Cardiac septum (tissue), 1 donor: ENCODE measurements at regions of chr4 and their contacts with region 1.

Region 1: DNA sequence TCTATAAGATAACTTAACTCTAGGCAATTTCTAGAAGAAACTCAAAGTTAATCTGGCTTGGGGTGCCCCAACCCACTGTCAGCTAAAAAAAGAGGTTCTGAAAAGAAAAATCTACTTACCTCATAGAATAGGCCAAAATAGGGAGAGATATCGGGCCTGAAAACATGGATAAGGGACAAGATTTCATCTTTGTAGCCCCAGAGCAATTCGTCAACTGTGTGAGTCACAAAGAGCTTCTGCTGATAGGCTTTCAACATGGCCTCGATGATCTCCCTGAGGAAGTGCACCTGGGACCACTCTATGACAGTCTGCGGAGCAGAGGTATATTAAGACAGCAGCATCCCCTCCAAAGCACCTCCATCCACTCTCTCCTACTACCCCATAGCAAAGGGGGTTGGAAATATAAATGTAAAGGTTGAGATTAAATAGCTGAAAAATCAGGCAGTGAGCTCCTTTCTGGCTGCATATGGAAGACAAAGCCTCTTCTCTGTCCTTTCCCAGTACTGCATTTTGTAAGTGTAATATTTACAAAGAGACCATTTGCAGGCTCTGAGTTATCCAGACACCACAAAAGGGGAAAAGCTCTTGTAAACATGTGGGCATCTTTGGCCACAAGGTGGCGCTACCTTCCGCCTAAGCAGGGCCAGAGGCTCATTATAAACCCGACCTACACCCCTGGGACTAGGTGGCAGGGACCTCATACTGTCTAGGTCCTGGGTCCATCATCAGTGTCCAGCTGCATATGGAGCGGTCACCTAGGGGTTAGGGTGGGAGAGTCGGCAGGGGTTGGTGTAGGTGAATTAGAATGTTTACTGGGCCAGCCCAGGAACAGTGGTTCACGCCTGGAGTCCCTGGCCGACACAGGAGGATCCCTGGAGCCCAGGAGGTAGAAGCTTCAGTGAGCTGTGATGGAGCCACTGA is 31.5 kb upstream of the NUP54 start:
- DNase-seq: peak; percentile 85

Region 2: GRCh38 chr4:76251441-76252270 is 72.0 kb after region 1 on chr4 and contains the start of gene FAM47E:
- intact Hi-C with region 1: loop called (anchors 5 kb)
- DNase-seq: peak; percentile 89
- total RNA-seq, gene FAM47E: 2.9 TPM

Region 3: GRCh38 chr4:76377911-76378310 is 198.3 kb after region 1 on chr4:
- intact Hi-C with region 1: loop called (anchors 2 kb)
- DNase-seq: no peak

Region 4: DNA sequence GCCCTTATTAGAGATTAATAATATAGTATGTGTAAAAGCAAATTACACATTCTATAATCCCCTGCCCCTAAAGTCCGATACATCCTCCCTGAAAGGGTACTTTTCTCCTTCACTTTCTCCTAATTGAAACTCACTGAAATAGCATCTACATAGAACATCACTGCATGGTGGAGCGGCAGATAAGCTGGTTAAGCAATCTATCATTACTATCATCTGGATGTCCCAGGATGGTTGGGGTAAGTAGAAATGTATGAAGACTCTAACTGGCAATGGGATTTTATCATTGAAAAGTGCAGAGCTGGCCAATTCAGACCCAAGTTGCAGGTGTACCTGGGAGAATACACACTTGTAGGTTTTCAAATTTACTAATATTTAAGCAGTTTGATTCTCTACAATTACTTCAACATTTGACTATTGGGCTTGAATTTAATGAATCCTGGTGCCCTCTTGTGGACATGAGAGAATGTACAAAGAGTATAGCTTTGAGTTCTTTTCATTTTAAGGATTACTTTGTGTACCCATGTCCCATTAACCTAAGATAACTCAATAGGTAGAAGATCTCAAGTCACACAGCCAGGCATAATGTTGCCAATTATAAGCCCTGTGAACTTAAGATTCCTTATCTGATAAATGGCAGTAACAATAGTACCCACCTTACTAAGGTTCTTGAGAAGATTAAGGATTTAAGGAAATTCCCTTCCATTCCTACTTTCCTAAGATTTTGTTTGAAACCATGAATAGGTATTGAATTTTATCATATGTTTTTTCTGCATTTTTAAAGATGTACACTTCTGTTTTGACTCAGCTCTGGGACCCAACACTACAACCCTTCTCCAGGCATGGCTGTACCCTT is 325.2 kb after region 1 on chr4:
- intact Hi-C with region 1: loop called (anchors 2 kb)
- DNase-seq: no peak